ENCODE measurements at regions of chr13 and their contacts with region 1.

Region 1: GRCh38 chr13:46295491-46296114 is 83.9 kb downstream of the LRRC63 start:
- DNase-seq: peak; percentile 31 to 92 (median 79)
- ATAC-seq: peak; percentile 90 to 91 (median 90)
- H3K4me3 ChIP-seq: peak overlapping the region; percentile 6 to 11
- H3K4me3 Mint-ChIP-seq: peak overlapping the region; percentile 50 to 68 (median 61)
- H3K27ac ChIP-seq: peak overlapping the region; percentile 86
- H3K27ac Mint-ChIP-seq: peak overlapping the region; percentile 96 to 99
- H3K4me1 ChIP-seq: peaks cover 36 to 40% of the 10 kb centered on the region in 2 experiments
- H3K4me1 Mint-ChIP-seq: peaks cover 61 to 66% (median 61%) of the 10 kb centered on the region in 3 donors
- H3K27me3 ChIP-seq: no peaks in the 10 kb centered on the region
- H3K27me3 Mint-ChIP-seq: no peaks in the 10 kb centered on the region

Region 2: GRCh38 chr13:46119883-46120614 is 175.6 kb before region 1 on chr13:
- CTCF ChIA-PET with region 1: no interaction called
- POLR2A ChIA-PET with region 1: no interaction called
- DNase-seq: peak in 1 of 35 experiments; percentile 18
- ATAC-seq: no peak
- H3K4me3 ChIP-seq: no peak overlapping the region
- H3K4me3 Mint-ChIP-seq: no peak overlapping the region
- H3K27ac ChIP-seq: no peak overlapping the region
- H3K27ac Mint-ChIP-seq: no peak overlapping the region
- H3K4me1 ChIP-seq: peaks cover 12 to 16% of the 10 kb centered on the region in 2 experiments
- H3K4me1 Mint-ChIP-seq: peaks cover 33 to 35% (median 34%) of the 10 kb centered on the region in 3 donors
- H3K27me3 ChIP-seq: no peaks in the 10 kb centered on the region
- H3K27me3 Mint-ChIP-seq: no peaks in the 10 kb centered on the region

Region 3: DNA sequence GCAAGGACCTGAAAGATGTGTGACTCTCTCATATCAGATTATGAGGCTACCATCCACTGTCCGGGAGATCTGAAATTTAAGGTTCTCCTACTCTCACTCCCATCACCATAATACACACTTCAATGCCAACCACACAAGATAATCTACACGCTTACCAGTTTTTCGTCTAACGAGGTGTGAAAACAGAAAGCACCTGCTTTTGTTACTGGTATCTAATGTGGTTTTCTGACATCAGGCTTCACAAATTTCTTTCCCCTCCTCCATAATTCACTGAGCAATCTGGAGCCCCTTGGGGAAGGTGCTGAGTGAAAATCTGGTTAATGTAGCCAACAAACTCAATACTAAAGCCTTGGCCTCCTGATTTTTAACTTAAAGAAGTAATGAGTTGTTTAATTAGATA is 247.2 kb after region 1 on chr13:
- CTCF ChIA-PET with region 1: no interaction called
- POLR2A ChIA-PET with region 1: no interaction called
- DNase-seq: peak in 1 of 35 experiments; percentile 14
- ATAC-seq: peak in 1 of 4 experiments; percentile 61
- H3K4me3 ChIP-seq: no peak overlapping the region
- H3K4me3 Mint-ChIP-seq: no peak overlapping the region
- H3K27ac ChIP-seq: no peak overlapping the region
- H3K27ac Mint-ChIP-seq: no peak overlapping the region
- H3K4me1 ChIP-seq: no peaks in the 10 kb centered on the region
- H3K4me1 Mint-ChIP-seq: peaks cover 0 to 4% (median 0%) of the 10 kb centered on the region in 3 donors
- H3K27me3 ChIP-seq: no peaks in the 10 kb centered on the region
- H3K27me3 Mint-ChIP-seq: no peaks in the 10 kb centered on the region

Region 4: DNA sequence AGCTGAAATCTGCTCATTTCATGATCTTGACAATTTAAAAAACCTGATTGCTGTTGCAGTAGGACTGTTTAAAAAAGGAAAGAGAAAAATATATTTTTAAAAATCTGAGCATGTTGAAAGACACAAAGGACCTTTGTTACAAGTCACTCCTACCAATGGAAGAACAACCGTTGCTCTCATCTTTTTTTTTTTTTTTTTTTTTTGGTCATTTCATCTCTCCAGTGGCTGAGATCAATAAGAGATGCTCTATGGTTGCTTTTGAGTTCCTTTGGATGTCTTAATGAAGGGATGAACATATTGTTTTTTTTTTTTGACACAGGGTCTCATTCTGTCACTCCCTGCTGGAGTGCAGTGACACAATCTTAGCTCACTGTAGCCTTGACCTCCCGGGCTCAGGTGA is 286.6 kb after region 1 on chr13:
- CTCF ChIA-PET with region 1: no interaction called
- POLR2A ChIA-PET with region 1: interaction called in 1 of 2 experiments, 11 read pairs
- DNase-seq: no peak
- ATAC-seq: no peak
- H3K4me3 ChIP-seq: no peak overlapping the region
- H3K4me3 Mint-ChIP-seq: no peak overlapping the region
- H3K27ac ChIP-seq: no peak overlapping the region
- H3K27ac Mint-ChIP-seq: no peak overlapping the region
- H3K4me1 ChIP-seq: peaks cover 17 to 22% of the 10 kb centered on the region in 2 experiments
- H3K4me1 Mint-ChIP-seq: peaks cover 68 to 77% (median 73%) of the 10 kb centered on the region in 3 donors
- H3K27me3 ChIP-seq: no peaks in the 10 kb centered on the region
- H3K27me3 Mint-ChIP-seq: no peaks in the 10 kb centered on the region